Activated naive CD4-positive, alpha-beta T cell treated with anti-CD3 and anti-CD28 coated beads, Interleukin-2, amount 10 ng/mL, durations not matched to agents 7 days and 5 days (primary cell): ENCODE measurements at regions of chr1 and their contacts with region 1.

Region 1: DNA sequence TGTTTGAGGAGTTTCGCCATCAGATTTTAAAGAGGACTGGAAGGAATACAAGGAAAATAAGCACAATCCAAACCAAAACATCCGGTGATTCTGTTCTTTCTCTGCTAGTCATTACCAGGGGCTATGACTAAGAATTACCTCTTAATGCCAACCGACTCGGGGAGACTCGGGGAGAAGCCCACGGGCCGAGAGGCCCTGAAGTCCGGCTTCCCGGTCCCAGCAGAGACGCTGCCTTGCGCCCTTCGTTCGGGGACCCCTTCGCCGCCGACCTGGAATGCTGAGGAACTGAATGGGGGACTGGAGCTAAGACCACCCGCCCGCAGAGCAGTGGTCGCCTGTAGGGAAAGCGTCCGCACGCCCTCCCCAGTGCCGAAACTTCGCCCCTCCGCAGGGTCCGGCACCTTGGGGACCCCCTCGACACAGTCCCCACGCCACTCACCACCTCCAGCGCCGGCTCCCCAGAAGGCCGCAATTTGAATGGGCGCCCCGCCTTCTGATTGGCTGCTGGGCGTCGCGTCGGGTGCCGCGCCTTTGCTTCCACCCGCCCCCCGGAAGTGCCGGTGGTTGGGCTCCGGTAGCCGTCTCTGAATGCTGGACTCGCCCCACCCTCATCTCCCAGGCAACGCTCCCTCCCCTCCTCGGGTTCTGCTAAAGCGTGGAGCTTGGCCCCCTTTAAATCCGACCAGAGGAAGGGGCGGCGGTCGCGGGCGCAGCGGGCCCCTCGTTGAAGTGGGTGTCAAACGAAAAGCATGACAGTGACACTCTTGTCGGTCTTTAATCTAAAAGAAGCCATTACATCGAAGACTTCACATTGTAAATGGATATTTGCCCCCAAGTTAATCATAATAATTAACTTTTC is at the start of gene KIF14:
- DNase-seq: peak; percentile 98
- H3K4me3 Mint-ChIP-seq: peak within 1 kb of the TSS; percentile 91
- H3K27ac Mint-ChIP-seq: peak within 1 kb of the TSS; percentile 91
- H3K4me1 Mint-ChIP-seq: peaks cover 74% of the 10 kb centered on the region
- H3K27me3 Mint-ChIP-seq: no peaks in the 10 kb centered on the region

Region 2: DNA sequence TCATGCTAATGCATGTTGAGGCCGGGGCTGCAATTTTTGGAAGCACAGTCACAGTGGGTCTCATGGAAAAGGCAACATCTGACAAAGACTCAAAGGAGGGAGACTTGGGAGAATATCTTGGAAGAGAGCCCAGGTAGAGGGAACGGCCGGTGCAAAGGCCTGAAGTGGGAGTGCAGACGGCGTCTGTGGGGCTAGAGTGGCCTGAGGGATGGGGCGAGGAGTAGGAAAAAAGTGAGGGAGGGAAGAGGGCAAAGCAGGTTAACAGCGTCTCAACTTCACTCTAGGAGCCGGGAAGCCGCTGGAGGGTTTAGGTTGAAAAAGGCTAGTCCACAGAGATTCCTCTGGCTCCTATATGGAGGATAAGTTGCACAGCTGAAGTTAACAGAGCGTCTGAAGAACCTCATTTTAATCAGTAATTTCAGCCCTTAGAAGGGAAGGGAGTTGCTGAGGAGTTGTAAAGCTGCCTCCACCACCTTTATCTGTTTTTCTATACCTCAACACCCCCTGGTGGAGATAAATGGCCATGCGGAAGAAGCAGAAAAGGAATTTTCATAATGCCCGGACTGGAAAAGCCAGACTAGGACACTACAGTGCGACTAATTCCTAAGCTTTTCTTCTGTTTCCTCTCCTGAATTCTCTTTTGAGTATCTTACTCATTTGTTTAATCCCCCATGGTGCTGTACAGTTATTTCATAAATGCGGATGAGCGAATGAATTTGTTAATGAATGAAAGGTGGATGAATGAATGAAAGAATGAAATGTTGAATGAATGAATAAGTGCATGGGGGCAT is 131.9 kb before region 1 on chr1:
- CTCF ChIA-PET with region 1: no interaction called
- DNase-seq: peak; percentile 60
- H3K4me3 Mint-ChIP-seq: no peak overlapping the region
- H3K27ac Mint-ChIP-seq: no peak overlapping the region
- H3K4me1 Mint-ChIP-seq: peaks cover 4% of the 10 kb centered on the region
- H3K27me3 Mint-ChIP-seq: peaks cover 19% of the 10 kb centered on the region

Region 3: DNA sequence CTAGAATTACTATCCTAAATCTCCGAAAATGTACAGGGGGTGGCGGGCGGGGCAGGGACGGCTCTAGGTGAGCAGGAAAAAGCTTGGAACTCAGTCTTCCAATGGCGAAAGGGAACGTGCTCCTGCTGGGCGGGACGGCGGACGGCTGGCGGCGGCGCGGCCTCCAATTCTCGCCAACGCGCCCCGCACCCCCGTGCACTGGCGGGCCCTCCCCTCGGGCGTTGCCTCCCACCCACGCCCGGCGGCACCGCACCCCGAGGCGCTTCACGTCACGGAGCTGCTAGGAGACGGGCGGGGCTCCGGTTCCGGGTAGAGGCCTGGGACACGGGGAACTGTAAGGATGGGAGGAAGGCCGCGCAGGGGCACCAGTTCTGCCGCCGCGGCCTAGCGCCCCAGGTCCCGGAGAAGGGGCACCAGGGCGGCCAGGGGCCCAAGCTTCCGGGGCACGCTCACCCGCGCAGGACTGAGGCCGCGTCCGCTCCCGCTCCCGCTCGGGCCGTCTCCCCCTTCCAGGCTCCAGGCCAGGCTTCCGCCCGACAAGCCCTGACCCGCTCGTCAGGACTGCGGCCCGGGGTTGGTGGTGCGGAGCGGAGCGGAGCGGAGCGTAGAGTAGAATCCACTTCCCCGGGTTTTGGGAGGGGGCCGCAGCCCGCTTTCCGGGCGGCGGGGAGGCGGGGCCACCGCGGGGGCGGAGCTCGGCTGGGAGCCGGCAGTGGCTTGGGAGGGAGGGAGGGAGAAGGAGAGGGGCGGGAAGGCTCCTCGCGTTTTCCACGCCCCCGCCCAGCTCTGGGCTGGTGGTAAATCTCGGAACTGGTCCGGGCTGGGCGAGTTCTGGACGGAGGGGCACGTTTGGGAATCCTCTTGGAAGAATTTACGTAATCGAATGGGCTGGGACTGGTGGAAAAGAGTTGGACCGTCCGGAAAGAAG is 49.1 kb after region 1 on chr1 and contains the start of gene DDX59:
- CTCF ChIA-PET with region 1: interaction called, 11 read pairs
- DNase-seq: peak; percentile 92
- H3K4me3 Mint-ChIP-seq: peak within 1 kb of the TSS; percentile 85
- H3K27ac Mint-ChIP-seq: peak within 1 kb of the TSS; percentile 90
- H3K4me1 Mint-ChIP-seq: peaks cover 44% of the 10 kb centered on the region
- H3K27me3 Mint-ChIP-seq: no peaks in the 10 kb centered on the region

Region 4: DNA sequence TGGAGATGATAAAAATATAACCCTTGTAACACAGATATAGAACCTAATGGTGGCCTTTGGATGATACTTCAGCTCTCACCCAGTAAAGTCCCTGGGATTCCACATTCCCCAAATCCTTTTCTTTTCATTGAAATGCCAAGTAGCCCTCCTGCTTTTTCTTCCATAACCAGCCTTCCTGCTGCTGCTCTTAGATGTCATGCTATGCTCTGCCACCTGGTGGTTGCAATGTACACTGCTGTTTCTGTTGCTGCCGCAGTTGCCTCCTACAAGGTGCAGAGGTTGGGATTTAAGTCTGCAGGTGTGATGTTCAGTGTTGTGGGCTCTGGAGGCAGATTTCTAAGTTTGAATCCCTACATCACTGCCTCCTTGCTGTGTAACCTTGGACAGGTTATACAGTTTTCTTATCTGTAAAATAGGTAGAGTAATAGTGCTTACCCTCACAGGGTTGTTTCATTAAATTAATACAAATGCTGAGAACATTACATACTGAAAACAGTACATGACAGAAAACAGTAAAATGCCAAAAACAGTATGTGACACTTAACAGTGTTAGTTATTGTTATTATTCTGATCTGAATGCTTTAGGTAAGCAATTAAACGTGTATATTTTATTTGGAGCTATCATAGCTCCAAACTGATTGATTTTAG is 182.5 kb after region 1 on chr1:
- CTCF ChIA-PET with region 1: interaction called, 77 read pairs
- DNase-seq: peak; percentile 85
- H3K4me3 Mint-ChIP-seq: no peak overlapping the region
- H3K27ac Mint-ChIP-seq: no peak overlapping the region
- H3K4me1 Mint-ChIP-seq: no peaks in the 10 kb centered on the region
- H3K27me3 Mint-ChIP-seq: no peaks in the 10 kb centered on the region

Region 5: GRCh38 chr1:201023517-201023902 is 403.0 kb after region 1 on chr1 and contains the start of gene KIF21B:
- CTCF ChIA-PET with region 1: interaction called, 10 read pairs
- DNase-seq: peak; percentile 94
- H3K4me3 Mint-ChIP-seq: peak within 1 kb of the TSS; percentile 89
- H3K27ac Mint-ChIP-seq: peak within 1 kb of the TSS; percentile 100
- H3K4me1 Mint-ChIP-seq: peaks cover 75% of the 10 kb centered on the region
- H3K27me3 Mint-ChIP-seq: peaks cover 3% of the 10 kb centered on the region

Region 6: DNA sequence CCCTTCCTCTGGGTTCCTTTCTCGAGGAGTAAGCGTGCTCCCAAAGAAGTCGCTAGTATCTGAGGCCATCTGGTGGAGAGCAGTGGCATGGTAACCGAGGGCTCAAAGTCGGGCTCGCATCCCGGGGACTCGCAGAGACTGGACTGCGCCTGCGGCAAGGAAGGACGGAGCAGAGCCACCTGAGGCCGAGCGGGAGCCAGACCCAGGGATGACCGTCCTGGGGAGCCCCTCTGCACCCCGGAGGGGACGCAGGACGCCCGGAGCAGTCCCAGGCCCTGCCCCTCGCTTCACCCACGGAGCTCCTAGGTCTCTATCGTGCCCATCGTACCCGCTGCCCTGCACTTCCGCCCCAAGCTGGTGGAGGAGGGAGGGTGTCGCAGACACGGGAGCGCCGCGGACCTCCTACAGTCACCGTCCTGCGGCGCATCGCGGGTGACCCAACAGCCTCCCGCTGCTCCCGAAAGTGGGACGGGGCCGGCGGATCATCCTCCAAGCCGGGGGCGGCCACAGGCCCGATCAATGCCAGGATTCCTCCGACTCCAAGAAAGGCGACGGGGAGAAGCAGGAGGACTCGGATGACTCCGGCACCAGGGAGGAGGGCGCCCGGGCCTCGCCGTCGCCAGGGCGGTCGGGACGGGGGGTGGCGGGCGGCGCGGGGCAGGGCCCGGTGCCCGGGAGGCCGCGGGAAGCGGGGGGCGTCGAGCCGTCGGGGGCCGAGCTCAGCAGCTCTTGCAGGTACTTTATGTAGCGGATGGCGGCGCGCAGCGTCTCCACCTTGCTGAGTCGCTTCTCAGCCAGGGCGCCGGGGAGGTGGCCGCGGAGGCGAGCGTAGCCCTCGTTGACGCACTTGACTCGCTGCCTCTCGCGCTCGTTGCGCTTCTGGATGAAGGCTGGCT is 494.0 kb after region 1 on chr1:
- CTCF ChIA-PET with region 1: interaction called, 14 read pairs
- DNase-seq: peak; percentile 81
- H3K4me3 Mint-ChIP-seq: peak overlapping the region; percentile 77
- H3K27ac Mint-ChIP-seq: no peak overlapping the region
- H3K4me1 Mint-ChIP-seq: peaks cover 7% of the 10 kb centered on the region
- H3K27me3 Mint-ChIP-seq: peaks cover 72% of the 10 kb centered on the region